Psoas muscle (tissue), 8 donors: ENCODE measurements at regions of chr14 and their contacts with region 1.

Region 1: DNA sequence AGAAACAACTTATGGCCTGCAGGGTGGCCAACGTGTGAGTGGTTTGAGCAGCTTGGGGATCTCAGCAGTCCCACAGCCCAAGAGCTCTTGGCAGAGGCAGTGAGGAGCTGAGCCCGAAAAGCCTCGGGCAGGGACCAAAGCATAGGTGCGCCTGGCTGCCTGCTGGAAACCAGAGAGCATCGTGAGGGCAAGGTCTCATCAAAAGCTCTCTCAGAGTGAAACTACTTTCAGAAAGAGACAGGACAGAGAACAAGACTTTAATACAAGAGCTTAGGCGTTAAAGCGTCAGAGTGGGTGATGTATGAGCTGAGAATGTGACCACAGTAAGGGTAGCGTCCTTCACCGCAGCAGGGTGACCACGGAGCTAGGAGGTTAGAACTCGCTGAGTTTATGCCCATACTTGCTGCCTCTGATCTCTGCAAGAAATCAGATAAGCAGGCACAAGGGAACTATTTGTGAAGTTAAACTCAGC is 30.8 kb downstream of the LGMN start:
- DNase-seq: no peak
- ATAC-seq: no peak
- H3K4me3 ChIP-seq: no peak overlapping the region
- H3K27ac ChIP-seq: no peak overlapping the region
- H3K4me1 ChIP-seq: no peaks in the 10 kb centered on the region
- H3K27me3 ChIP-seq: no peaks in the 10 kb centered on the region
- CTCF ChIP-seq: no peak

Region 2: DNA sequence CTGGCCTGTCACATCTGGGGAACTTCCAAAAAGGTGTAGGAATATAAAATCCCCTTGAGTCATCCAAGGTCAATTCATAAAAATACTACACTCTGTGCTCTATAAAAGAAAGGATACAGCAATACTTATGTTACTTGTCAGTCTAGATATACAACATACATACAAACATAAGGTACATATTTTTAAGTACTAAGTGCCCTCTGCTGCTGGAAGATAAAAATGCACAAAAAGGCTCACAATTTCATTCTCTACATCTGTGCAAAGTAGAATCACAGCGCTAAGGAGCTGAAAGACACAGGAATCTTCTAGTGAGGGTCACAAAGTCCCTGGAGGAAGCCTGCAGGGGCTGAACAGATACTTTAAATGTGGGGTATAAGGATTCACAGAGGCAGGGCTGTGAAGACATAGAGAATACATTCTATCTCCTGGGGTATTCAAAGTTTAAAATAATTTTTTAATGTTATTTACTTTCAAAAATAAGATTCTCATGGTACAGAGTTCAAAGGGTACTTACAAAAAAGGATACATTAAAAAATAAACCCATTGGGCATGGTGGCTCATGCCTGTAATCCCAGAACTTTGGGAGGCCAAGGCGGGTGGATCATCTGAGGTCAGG is 66.3 kb after region 1 on chr14:
- intact Hi-C with region 1: loop called (anchors 1 to 5 kb)
- DNase-seq: no peak
- ATAC-seq: peak; percentile 58 to 83 (median 65)
- H3K4me3 ChIP-seq: no peak overlapping the region
- H3K27ac ChIP-seq: no peak overlapping the region
- H3K4me1 ChIP-seq: peaks cover 4% of the 10 kb centered on the region
- H3K27me3 ChIP-seq: no peaks in the 10 kb centered on the region
- CTCF ChIP-seq: peak; percentile 60